ENCODE measurements at regions of chr11 and their contacts with region 1.

Region 1: GRCh38 chr11:46238967-46239800 is 38.3 kb upstream of the CREB3L1 start:
- DNase-seq: peak; percentile 81 to 90
- ATAC-seq: peak; percentile 80 to 91 (median 80)
- H3K4me3 ChIP-seq: no peak overlapping the region
- H3K4me3 Mint-ChIP-seq: no peak overlapping the region
- H3K27ac ChIP-seq: no peak overlapping the region
- H3K27ac Mint-ChIP-seq: no peak overlapping the region
- H3K4me1 ChIP-seq: peaks cover 35% of the 10 kb centered on the region
- H3K4me1 Mint-ChIP-seq: peaks cover 7 to 20% of the 10 kb centered on the region in 2 donors
- H3K27me3 ChIP-seq: peaks cover 22% of the 10 kb centered on the region
- H3K27me3 Mint-ChIP-seq: peaks cover 32 to 34% of the 10 kb centered on the region in 2 donors
- CTCF ChIP-seq: peak; percentile 98

Region 2: DNA sequence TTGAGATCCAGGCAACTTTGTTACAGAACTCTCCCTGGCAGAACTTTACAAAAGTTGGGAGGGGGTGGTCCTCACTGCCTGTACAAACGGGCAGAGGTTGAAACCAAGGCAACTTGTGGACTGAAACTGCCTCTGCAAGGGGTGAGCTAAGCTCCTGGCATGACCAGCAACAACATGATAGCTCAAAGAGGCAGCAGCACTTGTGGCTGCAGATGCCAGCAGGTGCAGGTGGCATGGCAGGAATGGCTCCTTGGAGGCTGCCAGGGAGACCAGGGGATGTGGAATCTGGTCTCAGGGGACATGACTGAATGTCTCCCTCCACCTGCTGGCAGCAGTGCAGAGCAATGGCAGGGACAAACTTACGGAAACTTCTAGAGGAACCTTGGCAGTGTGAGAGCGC is 79.1 kb before region 1 on chr11:
- intact Hi-C with region 1: no loop called
- DNase-seq: no peak
- ATAC-seq: no peak
- H3K4me3 ChIP-seq: no peak overlapping the region
- H3K4me3 Mint-ChIP-seq: no peak overlapping the region
- H3K27ac ChIP-seq: no peak overlapping the region
- H3K27ac Mint-ChIP-seq: no peak overlapping the region
- H3K4me1 ChIP-seq: no peaks in the 10 kb centered on the region
- H3K4me1 Mint-ChIP-seq: no peaks in the 10 kb centered on the region
- H3K27me3 ChIP-seq: no peaks in the 10 kb centered on the region
- H3K27me3 Mint-ChIP-seq: peaks cover 29 to 37% of the 10 kb centered on the region in 2 donors
- CTCF ChIP-seq: no peak

Region 3: GRCh38 chr11:46308631-46309419 is 69.6 kb after region 1 on chr11:
- intact Hi-C with region 1: loop called (anchors 1 kb)
- DNase-seq: peak; percentile 55 to 78
- ATAC-seq: peak; percentile 69 to 93 (median 86)
- H3K4me3 ChIP-seq: no peak overlapping the region
- H3K4me3 Mint-ChIP-seq: peak overlapping the region; percentile 21
- H3K27ac ChIP-seq: no peak overlapping the region
- H3K27ac Mint-ChIP-seq: no peak overlapping the region
- H3K4me1 ChIP-seq: peaks cover 23% of the 10 kb centered on the region
- H3K4me1 Mint-ChIP-seq: peaks cover 0 to 9% of the 10 kb centered on the region in 2 donors
- H3K27me3 ChIP-seq: no peaks in the 10 kb centered on the region
- H3K27me3 Mint-ChIP-seq: peaks cover 0 to 3% of the 10 kb centered on the region in 2 donors
- CTCF ChIP-seq: peak; percentile 87

Region 4: GRCh38 chr11:46529095-46529905 is 290.1 kb after region 1 on chr11:
- intact Hi-C with region 1: loop called (anchors 5 kb)
- DNase-seq: peak; percentile 64 to 87
- ATAC-seq: peak; percentile 93 to 100 (median 99)
- H3K4me3 ChIP-seq: no peak overlapping the region
- H3K4me3 Mint-ChIP-seq: no peak overlapping the region
- H3K27ac ChIP-seq: no peak overlapping the region
- H3K27ac Mint-ChIP-seq: peak overlapping the region; percentile 11 to 38
- H3K4me1 ChIP-seq: no peaks in the 10 kb centered on the region
- H3K4me1 Mint-ChIP-seq: peaks cover 34 to 42% of the 10 kb centered on the region in 2 donors
- H3K27me3 ChIP-seq: no peaks in the 10 kb centered on the region
- H3K27me3 Mint-ChIP-seq: no peaks in the 10 kb centered on the region
- CTCF ChIP-seq: peak; percentile 93

Measured in natural killer cell (primary cell).